Activated CD8-positive, alpha-beta T cell treated with anti-CD3 and anti-CD28 coated beads, Interleukin-2, amount 10 ng/mL, durations not matched to agents 7 days and 5 days (primary cell): ENCODE measurements at regions of chr15 and their contacts with region 1.

Region 1: DNA sequence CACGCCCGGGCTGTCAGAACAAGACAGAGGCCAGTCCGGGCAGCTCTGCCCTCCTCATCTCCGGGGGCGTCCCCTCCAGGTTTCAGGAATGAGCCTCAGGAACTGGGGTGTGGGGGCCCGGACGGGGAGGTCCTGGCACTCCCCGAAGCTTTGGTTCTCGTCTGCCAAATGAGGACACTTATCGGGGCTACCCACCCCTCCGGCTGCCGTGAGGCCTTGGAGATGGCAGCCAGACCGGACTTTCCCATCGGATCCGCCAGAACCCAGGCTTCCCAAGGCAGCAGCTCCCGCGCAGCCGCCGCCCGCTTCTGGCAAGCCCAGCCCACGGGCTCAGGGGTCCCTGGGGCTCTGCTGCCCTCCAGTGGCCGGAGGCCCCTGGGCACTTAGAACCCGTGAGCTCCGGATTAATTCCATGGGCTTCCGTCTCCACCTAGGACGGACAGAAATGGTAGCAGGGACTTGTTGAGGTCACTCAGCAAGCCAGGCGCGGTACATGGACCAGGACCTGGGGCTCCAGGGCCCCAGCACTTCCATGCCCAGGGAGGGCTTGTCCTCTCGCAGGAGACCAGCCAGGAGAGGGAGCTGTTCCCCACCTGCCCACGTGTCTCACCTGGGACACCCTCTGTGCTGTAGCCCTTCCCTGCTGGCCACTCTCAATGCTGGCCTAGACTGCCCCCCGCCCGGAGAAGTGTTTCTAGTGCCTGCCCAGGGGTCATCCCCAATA is 89.4 kb downstream of the LINGO1 start:
- DNase-seq: peak; percentile 82
- ATAC-seq: peak; percentile 96
- H3K4me3 Mint-ChIP-seq: peak overlapping the region; percentile 77
- H3K27ac Mint-ChIP-seq: peak overlapping the region; percentile 57
- H3K4me1 Mint-ChIP-seq: peaks cover 11% of the 10 kb centered on the region
- H3K27me3 Mint-ChIP-seq: no peaks in the 10 kb centered on the region

Region 2: DNA sequence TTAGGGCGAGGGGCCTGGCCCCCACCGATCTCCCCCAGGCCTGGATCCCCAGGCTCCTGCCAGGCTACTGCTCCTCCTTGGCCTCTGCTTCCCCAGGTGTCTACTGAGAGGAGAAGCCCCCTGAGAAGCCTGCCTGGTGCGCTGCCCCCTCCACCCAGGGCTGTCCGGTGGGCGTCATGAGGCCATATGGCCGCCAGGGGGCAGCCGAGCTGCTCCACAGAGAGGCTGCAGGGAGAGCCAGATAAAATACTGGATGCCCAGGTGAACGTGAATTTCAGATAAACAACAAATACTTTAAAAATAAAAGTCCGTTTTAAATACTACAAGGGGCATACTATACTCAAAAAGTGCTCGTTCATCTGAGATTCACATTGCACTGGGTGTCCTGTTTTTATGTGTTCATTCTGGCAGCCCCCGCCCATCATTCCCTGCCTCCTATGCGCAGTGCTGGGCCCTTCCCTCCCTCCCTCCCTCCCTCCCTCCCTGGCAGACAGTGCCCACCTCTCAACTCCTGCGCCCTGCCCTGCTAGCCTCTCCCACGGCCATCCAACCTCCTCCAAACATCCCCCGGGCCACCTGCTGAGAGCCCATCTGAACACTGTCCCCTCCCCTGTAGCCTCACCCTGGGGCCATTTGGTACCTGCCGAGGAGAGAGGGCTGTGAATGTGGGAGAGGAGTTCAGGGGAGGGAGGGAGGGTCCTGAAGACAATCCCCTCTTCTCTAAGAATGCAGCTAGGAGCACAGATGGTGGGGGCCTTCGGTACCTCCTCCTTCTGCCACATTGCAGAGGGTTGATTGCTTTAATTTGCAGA is 518.8 kb before region 1 on chr15:
- CTCF ChIA-PET with region 1: interaction called, 11 read pairs
- POLR2A ChIA-PET with region 1: no interaction called
- DNase-seq: peak; percentile 74
- ATAC-seq: peak; percentile 37
- H3K4me3 Mint-ChIP-seq: no peak overlapping the region
- H3K27ac Mint-ChIP-seq: peak overlapping the region; percentile 99
- H3K4me1 Mint-ChIP-seq: peaks cover 82% of the 10 kb centered on the region
- H3K27me3 Mint-ChIP-seq: no peaks in the 10 kb centered on the region

Region 3: GRCh38 chr15:77107531-77108355 is 435.6 kb before region 1 on chr15:
- CTCF ChIA-PET with region 1: interaction called, 96 read pairs
- POLR2A ChIA-PET with region 1: interaction called, 3 read pairs
- DNase-seq: peak; percentile 67
- ATAC-seq: peak; percentile 65
- H3K4me3 Mint-ChIP-seq: no peak overlapping the region
- H3K27ac Mint-ChIP-seq: no peak overlapping the region
- H3K4me1 Mint-ChIP-seq: peaks cover 2% of the 10 kb centered on the region
- H3K27me3 Mint-ChIP-seq: no peaks in the 10 kb centered on the region

Region 4: DNA sequence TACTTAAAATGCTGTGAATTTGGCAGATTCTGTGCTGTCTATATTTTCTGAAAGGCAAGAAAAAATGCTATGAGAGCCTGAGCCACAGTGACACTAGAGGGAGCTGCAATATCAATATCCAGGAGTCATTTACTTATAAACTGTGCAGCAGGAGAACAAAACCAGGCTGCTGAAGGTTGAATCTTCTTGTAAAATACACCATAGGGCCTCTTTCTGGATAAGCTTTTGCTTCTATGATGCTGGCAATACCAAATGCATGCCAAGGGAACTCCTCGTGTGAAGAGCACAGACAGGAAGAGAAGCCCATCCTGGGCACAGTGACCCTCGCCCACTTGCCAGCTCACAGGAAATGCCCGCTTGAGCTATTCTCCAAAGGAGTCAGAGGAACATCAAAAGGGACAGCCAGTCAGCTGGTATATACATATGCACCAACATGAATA is 424.4 kb before region 1 on chr15:
- CTCF ChIA-PET with region 1: interaction called, 72 read pairs
- POLR2A ChIA-PET with region 1: no interaction called
- DNase-seq: peak; percentile 64
- ATAC-seq: peak; percentile 68
- H3K4me3 Mint-ChIP-seq: no peak overlapping the region
- H3K27ac Mint-ChIP-seq: no peak overlapping the region
- H3K4me1 Mint-ChIP-seq: peaks cover 18% of the 10 kb centered on the region
- H3K27me3 Mint-ChIP-seq: no peaks in the 10 kb centered on the region

Region 5: DNA sequence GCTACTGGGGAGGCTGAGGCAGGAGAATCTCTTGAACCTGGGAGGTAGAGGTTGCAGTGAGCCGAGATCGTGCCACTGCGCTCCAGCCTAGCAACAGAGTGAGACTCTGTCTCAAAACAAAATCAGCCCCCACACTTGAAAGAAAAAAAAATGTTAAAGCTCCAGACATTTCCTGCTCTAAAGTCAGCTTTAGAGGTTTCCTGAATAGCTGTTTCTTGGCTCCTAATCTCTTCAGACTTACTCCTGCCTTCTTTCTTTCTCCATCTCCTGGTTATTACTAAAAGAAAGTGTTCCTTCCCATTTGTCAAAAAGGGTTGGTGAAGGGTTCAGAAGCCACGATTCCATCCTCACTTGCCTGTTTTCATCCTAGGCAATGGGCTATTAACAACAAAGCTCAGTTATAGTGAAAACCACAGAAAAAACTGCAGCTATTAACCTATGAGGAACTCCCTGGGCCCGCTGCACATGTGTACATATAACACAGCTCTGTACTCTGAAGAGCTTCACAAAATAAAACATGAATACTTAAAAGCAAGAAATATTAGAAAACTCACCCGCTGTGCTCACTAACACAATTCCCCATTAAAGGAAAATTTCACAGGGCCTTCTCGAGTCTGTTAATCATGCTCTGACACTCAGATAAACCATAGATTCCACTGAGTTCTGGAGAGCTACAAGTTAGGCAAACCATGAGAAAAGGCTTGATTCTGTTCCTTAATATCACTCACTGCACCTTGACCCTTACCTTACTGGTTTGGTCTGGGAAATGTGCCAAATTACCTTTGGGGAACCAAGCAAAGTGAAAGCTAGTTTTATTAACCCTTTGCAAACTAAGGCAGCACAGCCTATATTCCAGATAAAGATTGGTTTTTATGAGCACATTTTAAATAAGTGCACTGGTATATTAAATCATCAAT is 382.5 kb before region 1 on chr15:
- CTCF ChIA-PET with region 1: interaction called, 11 read pairs
- POLR2A ChIA-PET with region 1: no interaction called
- DNase-seq: no peak
- ATAC-seq: peak; percentile 57
- H3K4me3 Mint-ChIP-seq: peak overlapping the region; percentile 8
- H3K27ac Mint-ChIP-seq: peak overlapping the region; percentile 47
- H3K4me1 Mint-ChIP-seq: peaks cover 38% of the 10 kb centered on the region
- H3K27me3 Mint-ChIP-seq: no peaks in the 10 kb centered on the region

Region 6: GRCh38 chr15:77409259-77410156 is 133.8 kb before region 1 on chr15:
- CTCF ChIA-PET with region 1: interaction called, 10 read pairs
- POLR2A ChIA-PET with region 1: interaction called, 4 read pairs
- DNase-seq: peak; percentile 72
- ATAC-seq: peak; percentile 93
- H3K4me3 Mint-ChIP-seq: peak overlapping the region; percentile 51
- H3K27ac Mint-ChIP-seq: peak overlapping the region; percentile 88
- H3K4me1 Mint-ChIP-seq: peaks cover 50% of the 10 kb centered on the region
- H3K27me3 Mint-ChIP-seq: no peaks in the 10 kb centered on the region

Region 7: DNA sequence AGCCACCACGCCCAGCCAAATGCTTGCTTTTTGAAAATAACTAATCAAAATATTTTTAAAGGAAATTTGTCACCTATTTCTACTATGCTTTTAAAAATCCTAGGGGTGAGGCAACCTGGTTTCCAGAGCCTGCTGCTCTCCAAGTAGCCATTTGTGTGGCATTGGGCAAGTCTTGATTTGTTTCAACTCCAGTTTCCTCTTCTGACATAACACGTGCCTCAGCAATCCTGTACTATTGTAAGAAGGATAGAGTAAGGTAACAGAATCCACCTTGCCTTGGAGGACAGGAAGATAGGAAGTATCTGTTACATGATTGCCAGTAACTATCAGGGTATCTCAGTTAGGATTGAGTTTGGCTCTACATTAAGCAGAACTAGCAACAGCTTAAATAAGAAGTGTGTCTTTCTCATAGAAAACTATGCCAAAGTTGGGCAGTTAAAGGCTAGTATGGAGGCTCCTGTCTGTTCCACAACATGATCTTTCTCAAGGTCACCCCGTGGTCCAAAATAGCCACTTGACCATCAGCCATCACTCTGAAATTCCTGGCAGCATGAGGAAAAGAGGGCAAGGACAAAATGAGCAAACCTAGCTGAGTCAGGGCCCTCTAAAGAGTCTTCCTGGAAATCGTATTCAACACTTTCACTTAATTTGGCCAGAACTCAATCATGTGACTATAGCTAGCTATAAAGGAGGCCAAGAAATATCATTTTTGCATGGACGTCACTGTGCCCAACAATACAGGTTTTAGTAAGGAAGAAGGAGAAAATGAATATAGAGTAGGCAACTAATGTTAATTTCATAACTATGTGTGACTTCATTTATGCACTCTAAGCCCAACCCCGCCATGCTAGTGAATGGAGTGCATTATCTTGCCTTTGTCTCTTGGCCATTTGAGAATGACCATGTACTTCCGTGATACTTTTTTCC is 56.5 kb before region 1 on chr15:
- CTCF ChIA-PET with region 1: interaction called, 10 read pairs
- POLR2A ChIA-PET with region 1: no interaction called
- DNase-seq: no peak
- ATAC-seq: no peak
- H3K4me3 Mint-ChIP-seq: no peak overlapping the region
- H3K27ac Mint-ChIP-seq: peak overlapping the region; percentile 4
- H3K4me1 Mint-ChIP-seq: peaks cover 14% of the 10 kb centered on the region
- H3K27me3 Mint-ChIP-seq: no peaks in the 10 kb centered on the region

Region 8: DNA sequence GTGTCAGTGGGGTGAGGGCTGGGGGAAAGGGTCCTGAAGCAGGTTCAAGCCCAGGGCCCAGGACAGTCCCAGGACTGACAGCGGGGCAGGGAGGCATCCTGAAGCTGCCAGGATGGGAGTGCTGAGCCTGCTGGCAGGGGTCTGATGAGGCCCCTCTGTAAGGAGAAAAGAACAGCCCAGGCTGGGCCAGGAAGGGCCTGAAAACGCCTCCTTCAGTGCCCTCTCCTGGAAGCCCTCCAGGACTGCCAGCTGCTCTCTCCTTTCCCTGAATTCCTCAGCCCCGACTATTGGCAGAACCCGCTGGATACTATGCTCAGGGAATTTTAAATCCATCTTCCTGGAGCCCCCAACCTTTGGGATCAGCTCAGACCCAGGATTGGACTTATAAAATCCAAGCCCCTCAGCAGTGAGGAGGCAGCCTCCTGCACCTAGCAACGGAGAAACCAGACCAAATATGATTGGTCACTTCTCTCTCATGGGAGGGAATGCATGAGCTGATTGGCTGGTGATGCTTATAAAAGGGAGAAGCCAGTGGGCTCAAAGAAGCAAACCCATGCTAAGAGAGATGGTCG is 292.9 kb after region 1 on chr15:
- CTCF ChIA-PET with region 1: no interaction called
- POLR2A ChIA-PET with region 1: no interaction called
- DNase-seq: no peak
- ATAC-seq: no peak
- H3K4me3 Mint-ChIP-seq: no peak overlapping the region
- H3K27ac Mint-ChIP-seq: no peak overlapping the region
- H3K4me1 Mint-ChIP-seq: no peaks in the 10 kb centered on the region
- H3K27me3 Mint-ChIP-seq: no peaks in the 10 kb centered on the region

Region 9: DNA sequence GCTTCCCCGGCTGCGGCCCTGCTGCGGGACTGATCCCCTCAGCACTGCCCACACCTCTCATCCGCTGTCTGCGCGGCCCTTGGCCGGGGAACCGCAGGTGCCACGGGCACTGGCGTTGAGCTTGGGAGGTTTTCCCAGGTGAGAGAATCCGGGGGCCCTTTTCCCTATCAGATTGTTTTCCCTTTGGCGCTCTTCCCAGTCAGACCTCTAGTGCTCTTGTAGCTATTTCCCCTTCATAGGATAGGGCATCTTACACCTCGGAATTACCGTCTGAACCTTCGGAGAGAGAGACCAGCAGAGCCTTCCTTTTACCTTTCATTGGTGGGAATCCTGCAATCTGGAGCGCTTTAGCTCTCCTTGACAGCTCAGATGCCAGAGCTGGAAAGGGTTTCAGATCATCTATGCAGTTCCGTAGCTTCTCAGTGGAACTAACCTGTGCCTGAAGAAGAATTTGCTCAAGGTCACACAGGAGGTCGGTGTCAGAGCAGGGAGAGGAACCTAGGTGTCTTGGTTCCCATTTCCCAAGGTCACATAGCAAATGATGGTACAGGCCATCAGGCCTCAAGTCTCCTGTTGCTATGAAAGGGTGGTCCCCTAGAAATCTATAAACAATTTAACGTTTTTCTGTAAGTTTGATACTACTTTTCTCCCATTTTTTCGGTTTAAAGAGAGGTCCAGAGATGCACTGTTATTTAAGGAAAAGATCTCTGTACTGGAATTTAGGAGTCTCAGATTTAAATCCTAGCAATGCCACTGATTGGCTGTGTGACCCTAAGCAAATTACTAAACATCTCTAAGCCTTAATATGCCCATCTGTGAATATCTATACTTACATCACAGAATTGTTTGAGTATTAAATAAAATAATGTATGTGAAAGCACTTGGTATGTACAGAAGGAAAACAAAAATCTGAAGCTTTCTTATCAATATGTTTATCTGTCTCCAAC is 606.8 kb after region 1 on chr15:
- CTCF ChIA-PET with region 1: no interaction called
- POLR2A ChIA-PET with region 1: no interaction called
- DNase-seq: no peak
- ATAC-seq: no peak
- H3K4me3 Mint-ChIP-seq: peak overlapping the region; percentile 84
- H3K27ac Mint-ChIP-seq: peak overlapping the region; percentile 62
- H3K4me1 Mint-ChIP-seq: peaks cover 48% of the 10 kb centered on the region
- H3K27me3 Mint-ChIP-seq: no peaks in the 10 kb centered on the region